ENCODE measurements at regions of chr3 and their contacts with region 1.

Region 1: GRCh38 chr3:146189519-146190173 is 28.7 kb upstream of the PLOD2 start:
- DNase-seq: peak; percentile 5
- H3K4me3 Mint-ChIP-seq: no peak overlapping the region
- H3K27ac Mint-ChIP-seq: no peak overlapping the region
- H3K4me1 Mint-ChIP-seq: no peaks in the 10 kb centered on the region
- H3K27me3 Mint-ChIP-seq: peaks cover 15% of the 10 kb centered on the region

Region 2: GRCh38 chr3:145776782-145777408 is 412.8 kb before region 1 on chr3:
- CTCF ChIA-PET with region 1: no interaction called
- intact Hi-C with region 1: loop called (anchors 2 kb)
- DNase-seq: peak; percentile 13
- H3K4me3 Mint-ChIP-seq: no peak overlapping the region
- H3K27ac Mint-ChIP-seq: no peak overlapping the region
- H3K4me1 Mint-ChIP-seq: no peaks in the 10 kb centered on the region
- H3K27me3 Mint-ChIP-seq: no peaks in the 10 kb centered on the region

Region 3: GRCh38 chr3:146218880-146219866 is 29.5 kb after region 1 on chr3:
- CTCF ChIA-PET with region 1: interaction called, 5 read pairs
- intact Hi-C with region 1: loop called (anchors 1 kb)
- DNase-seq: peak; percentile 60
- H3K4me3 Mint-ChIP-seq: no peak overlapping the region
- H3K27ac Mint-ChIP-seq: no peak overlapping the region
- H3K4me1 Mint-ChIP-seq: no peaks in the 10 kb centered on the region
- H3K27me3 Mint-ChIP-seq: peaks cover 4% of the 10 kb centered on the region

Region 4: GRCh38 chr3:146577662-146578061 is 388.0 kb after region 1 on chr3:
- CTCF ChIA-PET with region 1: interaction called, 26 read pairs
- intact Hi-C with region 1: loop called (anchors 1 kb)
- DNase-seq: peak; percentile 56
- H3K4me3 Mint-ChIP-seq: no peak overlapping the region
- H3K27ac Mint-ChIP-seq: no peak overlapping the region
- H3K4me1 Mint-ChIP-seq: no peaks in the 10 kb centered on the region
- H3K27me3 Mint-ChIP-seq: no peaks in the 10 kb centered on the region

Region 5: GRCh38 chr3:146640955-146641867 is 451.6 kb after region 1 on chr3:
- CTCF ChIA-PET with region 1: interaction called, 17 read pairs
- intact Hi-C with region 1: loop called (anchors 1 kb)
- DNase-seq: peak; percentile 19
- H3K4me3 Mint-ChIP-seq: no peak overlapping the region
- H3K27ac Mint-ChIP-seq: no peak overlapping the region
- H3K4me1 Mint-ChIP-seq: no peaks in the 10 kb centered on the region
- H3K27me3 Mint-ChIP-seq: peaks cover 3% of the 10 kb centered on the region